ENCODE measurements at regions of chr5 and their contacts with region 1.

Region 1: GRCh38 chr5:93607367-93608258 is 24.6 kb downstream of the NR2F1 start:
- DNase-seq: peak in 1 of 10 donors; percentile 67

Region 2: GRCh38 chr5:93649234-93649900 is 41.8 kb after region 1 on chr5:
- intact Hi-C with region 1: no loop called
- DNase-seq: no peak

Region 3: GRCh38 chr5:93800988-93801811 is 193.6 kb after region 1 on chr5:
- intact Hi-C with region 1: loop called (anchors 2 kb)
- DNase-seq: peak in 3 of 10 donors; percentile 13 to 63 (median 21)

Region 4: DNA sequence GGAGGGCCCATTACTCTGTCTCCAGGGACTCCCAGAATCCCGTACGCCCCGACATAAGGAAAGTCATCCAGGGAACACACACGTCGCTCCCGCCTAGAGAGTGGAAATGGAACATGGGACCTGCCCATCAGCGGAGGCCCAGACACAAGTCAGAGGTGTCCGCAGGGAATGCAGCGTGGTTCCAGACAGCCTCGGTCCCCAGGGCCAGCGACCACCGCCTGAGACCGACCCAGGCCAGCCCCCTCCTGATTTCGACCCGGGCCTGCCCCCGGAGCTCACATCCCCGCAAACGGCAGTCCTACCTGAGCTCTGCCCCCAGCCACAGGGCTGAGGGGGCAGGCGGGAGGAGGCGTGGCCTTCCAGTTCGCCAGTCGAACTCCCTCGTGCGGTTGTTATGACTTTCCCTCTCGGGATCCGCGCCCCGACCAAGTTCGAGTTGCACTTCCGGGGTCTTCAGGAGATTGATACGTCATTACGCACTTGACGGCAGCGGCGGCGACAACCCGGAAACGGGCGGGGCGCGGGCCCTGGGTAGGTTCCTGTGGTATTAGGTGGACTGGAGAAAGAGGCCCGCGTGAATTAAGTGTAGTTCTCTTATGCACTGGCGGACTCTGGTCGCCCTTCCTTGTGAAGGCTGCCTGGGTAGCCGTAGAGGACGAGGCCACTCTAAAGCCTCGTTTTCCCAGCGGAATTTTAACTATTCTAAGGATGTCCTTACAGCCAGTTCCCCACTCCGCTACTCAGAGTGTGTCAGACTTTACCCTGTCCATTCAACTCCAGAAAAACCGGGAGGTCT is 503.8 kb after region 1 on chr5:
- intact Hi-C with region 1: loop called (anchors 10 kb)
- DNase-seq: peak; percentile 89 to 99 (median 94)

Region 5: DNA sequence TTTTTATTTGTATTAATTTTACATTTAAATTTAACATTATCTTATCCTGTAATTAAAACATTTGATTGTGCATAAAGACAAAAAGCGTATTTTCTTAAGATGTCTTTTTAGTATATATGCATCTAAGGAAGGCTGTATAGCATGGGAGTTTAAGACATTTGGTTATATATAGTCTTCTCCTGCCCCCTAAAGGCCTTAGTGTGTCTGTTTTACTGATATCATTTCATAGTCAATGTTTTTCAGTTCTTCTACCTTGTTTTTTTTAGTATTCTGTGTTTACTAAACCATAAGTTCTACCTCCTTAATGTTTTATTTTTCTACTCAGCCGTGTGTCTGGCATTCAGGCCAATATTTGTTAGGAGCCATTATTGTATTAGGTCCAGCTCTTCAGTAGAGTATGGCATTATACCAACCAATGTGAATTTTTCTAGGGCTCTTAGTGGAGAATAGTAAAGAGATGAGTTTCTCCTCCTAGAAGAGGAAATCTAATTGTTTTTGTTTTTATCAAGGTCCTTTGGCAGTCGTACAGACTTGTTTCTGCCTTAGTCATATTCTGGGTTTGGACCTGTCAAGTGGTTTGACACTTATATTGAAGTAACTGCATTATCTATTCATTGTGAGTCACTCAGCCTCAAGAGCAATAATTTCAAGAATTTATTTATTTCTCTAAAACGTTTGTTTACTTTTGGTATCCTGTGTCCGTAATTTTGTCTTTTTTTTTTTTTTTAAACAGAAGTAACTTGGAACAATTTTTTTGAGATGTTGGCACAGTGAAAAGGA is 1085.6 kb after region 1 on chr5:
- intact Hi-C with region 1: loop called (anchors 5 kb)
- DNase-seq: no peak